Posterior vena cava (tissue), 2 donors: ENCODE measurements at regions of chr20 and their contacts with region 1.

Region 1: DNA sequence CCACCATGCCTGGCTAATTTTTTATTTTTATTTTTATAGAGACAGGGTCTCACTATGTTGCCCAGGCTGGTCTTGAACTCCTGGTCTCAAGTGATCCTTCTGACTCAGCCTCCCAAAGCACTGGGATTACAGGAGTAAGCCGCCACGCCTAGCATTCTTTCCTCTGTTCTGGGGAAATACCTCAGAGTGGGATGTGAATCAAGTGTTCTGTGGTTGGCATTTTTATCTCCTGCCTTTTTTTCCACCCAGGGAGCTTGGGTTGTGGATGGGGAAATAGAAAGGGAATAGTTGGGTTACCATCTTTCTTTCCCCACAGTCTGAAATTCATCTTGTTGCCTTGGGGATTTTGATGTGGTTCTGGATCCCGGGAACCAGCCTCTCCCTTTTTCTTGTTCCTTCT is 24.1 kb downstream of the TFAP2C start:
- DNase-seq: no peak

Region 2: DNA sequence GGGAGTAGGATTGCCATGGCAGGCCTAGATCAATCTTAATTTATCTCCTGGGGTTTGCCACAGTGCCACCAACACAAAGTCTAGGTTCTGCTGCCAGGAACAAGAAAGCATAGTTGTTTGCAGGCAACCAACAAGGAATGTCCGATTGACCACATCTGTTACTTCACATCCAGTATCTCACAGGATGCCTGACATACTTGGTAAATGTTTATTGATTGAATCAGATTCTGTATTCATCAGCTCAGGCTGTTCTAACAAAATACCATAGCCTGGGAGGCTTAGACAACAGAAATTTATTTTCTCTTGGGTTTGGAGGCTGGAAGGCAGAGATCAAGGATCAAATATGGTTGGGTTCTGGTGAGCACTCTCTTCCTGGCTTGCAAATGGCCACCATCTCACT is 431.0 kb before region 1 on chr20:
- intact Hi-C with region 1: no loop called
- DNase-seq: no peak

Region 3: GRCh38 chr20:56621730-56622129 is 31.5 kb before region 1 on chr20:
- intact Hi-C with region 1: loop called in 1 of 2 experiments (anchors 1 kb)
- DNase-seq: no peak